ENCODE measurements at regions of chr18 and their contacts with region 1.

Region 1: GRCh38 chr18:22983175-22983574 is 50.0 kb downstream of the RBBP8 start:
- DNase-seq: peak; percentile 40
- H3K4me3 ChIP-seq: no peak overlapping the region
- H3K27ac ChIP-seq: no peak overlapping the region
- H3K4me1 ChIP-seq: peaks cover 6% of the 10 kb centered on the region
- CTCF ChIP-seq: peak; percentile 81

Region 2: GRCh38 chr18:22813648-22814328 is 169.4 kb before region 1 on chr18:
- CTCF ChIA-PET with region 1: no interaction called
- POLR2A ChIA-PET with region 1: no interaction called
- intact Hi-C with region 1: no loop called
- DNase-seq: peak; percentile 33
- H3K4me3 ChIP-seq: no peak overlapping the region
- H3K27ac ChIP-seq: no peak overlapping the region
- H3K4me1 ChIP-seq: no peaks in the 10 kb centered on the region
- CTCF ChIP-seq: peak; percentile 77

Region 3: GRCh38 chr18:22856870-22857269 is 126.3 kb before region 1 on chr18:
- CTCF ChIA-PET with region 1: no interaction called
- POLR2A ChIA-PET with region 1: no interaction called
- intact Hi-C with region 1: no loop called
- DNase-seq: no peak
- H3K4me3 ChIP-seq: no peak overlapping the region
- H3K27ac ChIP-seq: no peak overlapping the region
- H3K4me1 ChIP-seq: no peaks in the 10 kb centered on the region
- CTCF ChIP-seq: no peak

Region 4: GRCh38 chr18:23020555-23021294 is 37.5 kb after region 1 on chr18:
- CTCF ChIA-PET with region 1: no interaction called
- POLR2A ChIA-PET with region 1: no interaction called
- intact Hi-C with region 1: loop called (anchors 5 kb)
- DNase-seq: no peak
- H3K4me3 ChIP-seq: no peak overlapping the region
- H3K27ac ChIP-seq: peak overlapping the region; percentile 22
- H3K4me1 ChIP-seq: peaks cover 6% of the 10 kb centered on the region
- CTCF ChIP-seq: no peak

Region 5: GRCh38 chr18:23053776-23054457 is 70.7 kb after region 1 on chr18:
- CTCF ChIA-PET with region 1: no interaction called
- POLR2A ChIA-PET with region 1: no interaction called
- intact Hi-C with region 1: no loop called
- DNase-seq: no peak
- H3K4me3 ChIP-seq: no peak overlapping the region
- H3K27ac ChIP-seq: no peak overlapping the region
- H3K4me1 ChIP-seq: no peaks in the 10 kb centered on the region
- CTCF ChIP-seq: no peak

Region 6: GRCh38 chr18:23115683-23116096 is 132.5 kb after region 1 on chr18:
- CTCF ChIA-PET with region 1: no interaction called
- POLR2A ChIA-PET with region 1: no interaction called
- intact Hi-C with region 1: no loop called
- DNase-seq: no peak
- H3K4me3 ChIP-seq: no peak overlapping the region
- H3K27ac ChIP-seq: no peak overlapping the region
- H3K4me1 ChIP-seq: peaks cover 8% of the 10 kb centered on the region
- CTCF ChIP-seq: no peak

Measured in OCI-LY7 (cell line).